CD4-positive, alpha-beta T cell (primary cell): ENCODE measurements at regions of chr3 and their contacts with region 1.

Region 1: DNA sequence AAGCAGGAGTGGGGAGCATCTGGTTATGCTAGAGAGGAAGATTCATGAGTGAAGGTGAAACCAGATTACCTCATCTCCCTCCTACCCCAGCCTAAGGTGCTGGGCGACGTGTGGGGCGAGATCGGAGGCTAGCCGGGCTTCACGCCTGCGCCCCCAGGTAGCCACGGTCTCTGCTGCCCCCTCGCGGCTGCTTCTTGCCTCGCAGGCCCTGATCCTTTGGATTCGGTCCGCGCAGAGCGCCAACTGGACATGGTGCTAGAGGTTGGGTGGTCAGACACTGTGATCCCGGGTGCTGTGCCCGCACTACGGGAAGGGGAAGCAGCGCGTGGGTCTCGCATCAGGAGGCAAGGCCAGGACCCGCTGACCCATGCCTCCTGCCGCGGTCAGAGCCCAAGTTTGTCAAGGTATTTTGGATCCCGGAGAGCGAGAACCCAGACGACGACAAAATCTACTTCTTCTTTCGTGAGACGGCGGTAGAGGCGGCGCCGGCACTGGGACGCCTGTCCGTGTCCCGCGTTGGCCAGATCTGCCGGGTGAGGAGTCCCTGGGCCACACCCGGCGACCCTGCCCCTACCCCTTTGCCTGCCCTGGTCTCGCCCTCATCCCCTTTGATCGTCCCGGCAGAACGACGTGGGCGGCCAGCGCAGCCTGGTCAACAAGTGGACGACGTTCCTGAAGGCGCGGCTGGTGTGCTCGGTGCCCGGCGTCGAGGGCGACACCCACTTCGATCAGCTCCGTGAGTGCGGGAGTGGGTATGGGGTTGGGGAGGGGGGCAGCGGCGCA is 4.2 kb downstream of the SEMA3B start:
- DNase-seq: peak; percentile 70 to 92 (median 84)
- ATAC-seq: peak; percentile 78
- H3K4me3 ChIP-seq: peak overlapping the region; percentile 6
- H3K4me3 Mint-ChIP-seq: peak overlapping the region; percentile 48
- H3K27ac ChIP-seq: no peak overlapping the region
- H3K27ac Mint-ChIP-seq: no peak overlapping the region
- H3K4me1 ChIP-seq: peaks cover 40% of the 10 kb centered on the region
- H3K4me1 Mint-ChIP-seq: peaks cover 30% of the 10 kb centered on the region
- H3K27me3 ChIP-seq: peaks cover 35 to 45% of the 10 kb centered on the region in 2 experiments
- H3K27me3 Mint-ChIP-seq: peaks cover 52% of the 10 kb centered on the region
- CTCF ChIP-seq: peak; percentile 92

Region 2: GRCh38 chr3:50121416-50122032 is 151.6 kb before region 1 on chr3:
- CTCF ChIA-PET with region 1: no interaction called
- POLR2A ChIA-PET with region 1: no interaction called
- intact Hi-C with region 1: loop called (anchors 1 kb)
- DNase-seq: peak; percentile 55 to 86 (median 65)
- ATAC-seq: peak; percentile 87
- H3K4me3 ChIP-seq: no peak overlapping the region
- H3K4me3 Mint-ChIP-seq: no peak overlapping the region
- H3K27ac ChIP-seq: no peak overlapping the region
- H3K27ac Mint-ChIP-seq: peak overlapping the region; percentile 61
- H3K4me1 ChIP-seq: peaks cover 7% of the 10 kb centered on the region
- H3K4me1 Mint-ChIP-seq: peaks cover 6% of the 10 kb centered on the region
- H3K27me3 ChIP-seq: no peaks in the 10 kb centered on the region
- H3K27me3 Mint-ChIP-seq: no peaks in the 10 kb centered on the region
- CTCF ChIP-seq: peak; percentile 86

Region 3: GRCh38 chr3:50227390-50228183 is 45.5 kb before region 1 on chr3:
- CTCF ChIA-PET with region 1: interaction called, 5 read pairs
- POLR2A ChIA-PET with region 1: no interaction called
- intact Hi-C with region 1: loop called (anchors 1 kb)
- DNase-seq: peak; percentile 82 to 96 (median 90)
- ATAC-seq: peak; percentile 80
- H3K4me3 ChIP-seq: peak overlapping the region; percentile 68
- H3K4me3 Mint-ChIP-seq: peak overlapping the region; percentile 99
- H3K27ac ChIP-seq: peak overlapping the region; percentile 47 to 70
- H3K27ac Mint-ChIP-seq: peak overlapping the region; percentile 89
- H3K4me1 ChIP-seq: peaks cover 36% of the 10 kb centered on the region
- H3K4me1 Mint-ChIP-seq: peaks cover 32% of the 10 kb centered on the region
- H3K27me3 ChIP-seq: no peaks in the 10 kb centered on the region
- H3K27me3 Mint-ChIP-seq: no peaks in the 10 kb centered on the region
- CTCF ChIP-seq: peak; percentile 85

Region 4: GRCh38 chr3:50245831-50246516 is 27.1 kb before region 1 on chr3:
- CTCF ChIA-PET with region 1: interaction called, 4 read pairs
- POLR2A ChIA-PET with region 1: interaction called, 3 read pairs
- intact Hi-C with region 1: loop called (anchors 2 kb)
- DNase-seq: peak; percentile 92 to 98 (median 94)
- ATAC-seq: peak; percentile 80
- H3K4me3 ChIP-seq: peak overlapping the region; percentile 47
- H3K4me3 Mint-ChIP-seq: peak overlapping the region; percentile 83
- H3K27ac ChIP-seq: peak overlapping the region; percentile 89 to 90
- H3K27ac Mint-ChIP-seq: peak overlapping the region; percentile 92
- H3K4me1 ChIP-seq: peaks cover 100% of the 10 kb centered on the region
- H3K4me1 Mint-ChIP-seq: peaks cover 79% of the 10 kb centered on the region
- H3K27me3 ChIP-seq: no peaks in the 10 kb centered on the region
- H3K27me3 Mint-ChIP-seq: no peaks in the 10 kb centered on the region
- CTCF ChIP-seq: peak; percentile 98

Region 5: GRCh38 chr3:50321336-50322114 is 48.4 kb after region 1 on chr3:
- CTCF ChIA-PET with region 1: interaction called, 6 read pairs
- POLR2A ChIA-PET with region 1: no interaction called
- intact Hi-C with region 1: loop called (anchors 1 kb)
- DNase-seq: peak; percentile 68 to 89 (median 76)
- ATAC-seq: peak; percentile 66
- H3K4me3 ChIP-seq: peak overlapping the region; percentile 68
- H3K4me3 Mint-ChIP-seq: peak overlapping the region; percentile 90
- H3K27ac ChIP-seq: peak overlapping the region; percentile 75 to 96
- H3K27ac Mint-ChIP-seq: peak overlapping the region; percentile 82
- H3K4me1 ChIP-seq: peaks cover 76% of the 10 kb centered on the region
- H3K4me1 Mint-ChIP-seq: peaks cover 42% of the 10 kb centered on the region
- H3K27me3 ChIP-seq: no peaks in the 10 kb centered on the region
- H3K27me3 Mint-ChIP-seq: no peaks in the 10 kb centered on the region
- CTCF ChIP-seq: peak; percentile 45

Region 6: GRCh38 chr3:50542177-50543034 is 269.3 kb after region 1 on chr3:
- CTCF ChIA-PET with region 1: no interaction called
- POLR2A ChIA-PET with region 1: no interaction called
- intact Hi-C with region 1: loop called in 1 of 2 experiments (anchors 10 kb)
- DNase-seq: peak; percentile 29 to 79 (median 50)
- ATAC-seq: peak; percentile 74
- H3K4me3 ChIP-seq: no peak overlapping the region
- H3K4me3 Mint-ChIP-seq: no peak overlapping the region
- H3K27ac ChIP-seq: no peak overlapping the region
- H3K27ac Mint-ChIP-seq: no peak overlapping the region
- H3K4me1 ChIP-seq: no peaks in the 10 kb centered on the region
- H3K4me1 Mint-ChIP-seq: no peaks in the 10 kb centered on the region
- H3K27me3 ChIP-seq: peaks cover 0 to 4% of the 10 kb centered on the region in 2 experiments
- H3K27me3 Mint-ChIP-seq: peaks cover 13% of the 10 kb centered on the region
- CTCF ChIP-seq: peak; percentile 90